PC-9 (cell line): ENCODE measurements at regions of chr16 and their contacts with region 1.

Region 1: GRCh38 chr16:75805944-75806343 is 79.7 kb upstream of the CPHXL start:
- DNase-seq: no peak
- H3K4me3 ChIP-seq: no peak overlapping the region
- H3K27ac ChIP-seq: no peak overlapping the region
- H3K4me1 ChIP-seq: no peaks in the 10 kb centered on the region
- H3K27me3 ChIP-seq: peaks cover 50% of the 10 kb centered on the region
- CTCF ChIP-seq: no peak

Region 2: GRCh38 chr16:74936902-74937560 is 868.9 kb before region 1 on chr16:
- CTCF ChIA-PET with region 1: interaction called, 11 read pairs
- POLR2A ChIA-PET with region 1: no interaction called
- intact Hi-C with region 1: no loop called
- DNase-seq: peak in 1 of 2 experiments; percentile 51
- H3K4me3 ChIP-seq: no peak overlapping the region
- H3K27ac ChIP-seq: no peak overlapping the region
- H3K4me1 ChIP-seq: no peaks in the 10 kb centered on the region
- H3K27me3 ChIP-seq: no peaks in the 10 kb centered on the region
- CTCF ChIP-seq: no peak

Region 3: DNA sequence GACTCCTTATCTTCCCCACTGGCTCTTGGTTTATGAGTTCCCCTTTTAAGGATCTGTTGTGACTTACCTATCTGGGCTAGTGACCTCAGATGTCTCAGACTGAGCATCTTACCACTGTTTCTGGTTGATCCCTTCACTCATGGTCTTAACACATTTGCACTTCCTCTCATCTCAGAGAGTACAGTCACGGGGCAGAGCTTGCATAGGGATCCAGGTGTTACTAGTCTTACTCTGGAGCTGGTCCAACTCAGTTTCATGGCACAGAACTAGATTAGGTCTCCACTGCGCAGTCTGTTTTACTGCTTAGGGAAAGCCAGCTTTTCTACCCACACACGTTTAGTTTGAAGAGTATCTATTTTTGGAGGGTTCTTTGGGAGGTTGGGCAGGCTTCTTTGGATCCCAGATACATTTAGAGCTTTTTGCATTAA is 229.5 kb before region 1 on chr16:
- CTCF ChIA-PET with region 1: no interaction called
- POLR2A ChIA-PET with region 1: no interaction called
- intact Hi-C with region 1: no loop called
- DNase-seq: no peak
- H3K4me3 ChIP-seq: no peak overlapping the region
- H3K27ac ChIP-seq: no peak overlapping the region
- H3K4me1 ChIP-seq: no peaks in the 10 kb centered on the region
- H3K27me3 ChIP-seq: no peaks in the 10 kb centered on the region
- CTCF ChIP-seq: no peak

Region 4: GRCh38 chr16:75761108-75761507 is 44.8 kb before region 1 on chr16:
- CTCF ChIA-PET with region 1: no interaction called
- POLR2A ChIA-PET with region 1: no interaction called
- intact Hi-C with region 1: no loop called
- DNase-seq: no peak
- H3K4me3 ChIP-seq: no peak overlapping the region
- H3K27ac ChIP-seq: no peak overlapping the region
- H3K4me1 ChIP-seq: no peaks in the 10 kb centered on the region
- H3K27me3 ChIP-seq: no peaks in the 10 kb centered on the region
- CTCF ChIP-seq: no peak

Region 5: GRCh38 chr16:77166726-77167125 is 1360.8 kb after region 1 on chr16:
- CTCF ChIA-PET with region 1: interaction called, 14 read pairs
- POLR2A ChIA-PET with region 1: no interaction called
- intact Hi-C with region 1: no loop called
- DNase-seq: no peak
- H3K4me3 ChIP-seq: no peak overlapping the region
- H3K27ac ChIP-seq: no peak overlapping the region
- H3K4me1 ChIP-seq: no peaks in the 10 kb centered on the region
- H3K27me3 ChIP-seq: peaks cover 62% of the 10 kb centered on the region
- CTCF ChIP-seq: no peak